SK-N-SH (cell line): ENCODE measurements at regions of chr6 and their contacts with region 1.

Region 1: GRCh38 chr6:158605266-158605878 is 39.2 kb downstream of the DYNLT1 start:
- DNase-seq: peak; percentile 85
- H3K4me3 ChIP-seq: no peak overlapping the region
- H3K27ac ChIP-seq: no peak overlapping the region
- H3K4me1 ChIP-seq: peaks cover 0 to 15% of the 10 kb centered on the region in 2 experiments; a peak in 2 of 4 replicates
- H3K27me3 ChIP-seq: no peaks in the 10 kb centered on the region
- CTCF ChIP-seq: peak; percentile 74
- EP300 ChIP-seq: no peak
- RAD21 ChIP-seq: peak; percentile 79

Region 2: DNA sequence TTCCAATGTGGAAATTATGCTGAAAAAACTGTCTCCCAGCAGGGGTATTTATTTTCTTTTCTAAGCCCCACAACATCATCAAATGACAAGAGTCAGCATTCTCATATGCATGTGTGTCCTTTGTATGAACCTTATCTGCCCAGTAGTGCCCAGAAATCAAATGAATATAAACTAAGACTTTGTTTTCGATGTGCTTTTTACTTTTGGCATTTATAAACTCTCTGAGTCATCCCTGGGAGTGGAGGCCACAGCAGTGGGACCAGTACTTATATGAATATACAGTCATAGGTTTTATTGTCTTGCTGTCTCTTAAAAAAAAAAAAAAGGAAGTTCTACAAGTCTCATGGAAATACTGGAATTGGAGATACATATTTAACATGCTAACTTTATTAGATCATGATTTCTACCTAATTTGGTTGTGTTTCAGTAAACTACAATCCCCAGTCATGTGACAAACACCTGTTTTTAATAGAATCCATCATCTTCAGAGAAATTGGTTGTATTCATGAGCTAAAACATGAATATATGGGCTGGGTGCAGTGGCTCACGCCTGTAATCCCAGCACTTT is 144.7 kb before region 1 on chr6:
- CTCF ChIA-PET with region 1: no interaction called
- POLR2A ChIA-PET with region 1: no interaction called
- DNase-seq: no peak
- H3K4me3 ChIP-seq: no peak overlapping the region
- H3K27ac ChIP-seq: peak overlapping the region; percentile 44 to 47; a peak in 2 of 4 replicates
- H3K4me1 ChIP-seq: peaks cover 8 to 10% of the 10 kb centered on the region in 2 experiments; a peak in 2 of 4 replicates
- H3K27me3 ChIP-seq: no peaks in the 10 kb centered on the region
- CTCF ChIP-seq: no peak
- EP300 ChIP-seq: no peak
- RAD21 ChIP-seq: no peak

Region 3: DNA sequence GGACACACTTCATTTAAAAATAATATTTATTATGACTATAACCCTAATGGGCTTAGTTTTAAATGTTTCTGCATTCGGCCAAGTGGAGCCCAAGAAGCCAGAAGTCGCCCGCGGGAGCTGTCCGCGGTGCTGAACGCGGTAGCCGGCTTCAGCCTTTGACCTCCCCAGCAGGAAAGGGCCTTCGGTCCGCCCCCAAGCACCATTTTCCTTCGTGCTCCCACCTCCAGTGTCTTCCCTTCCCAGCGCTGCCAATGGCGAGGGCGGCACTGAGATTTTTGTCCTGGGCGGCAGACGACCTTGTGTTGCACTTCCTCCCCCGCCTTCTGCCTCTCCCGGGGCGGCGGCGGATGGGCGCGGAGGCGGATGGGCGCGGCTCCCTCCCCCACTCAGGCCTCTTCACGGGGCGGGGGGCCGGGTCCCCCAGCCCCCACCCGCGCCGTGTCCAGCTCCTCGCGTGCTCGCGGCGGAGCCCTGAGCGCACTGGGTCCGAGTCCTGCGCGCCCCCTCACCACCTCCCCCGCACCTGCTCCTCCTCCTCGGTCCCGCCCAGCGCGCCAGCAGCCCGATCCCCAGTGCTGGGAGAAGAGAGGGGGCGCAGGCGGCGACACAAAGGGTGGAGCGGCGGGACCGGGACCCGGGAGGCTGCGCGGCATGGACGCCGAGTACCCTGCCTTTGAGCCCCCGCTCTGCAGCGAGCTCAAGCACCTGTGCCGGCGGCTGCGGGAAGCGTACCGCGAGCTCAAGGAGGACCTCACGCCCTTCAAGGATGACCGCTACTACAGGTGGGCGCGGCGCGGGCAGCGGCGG is 69.1 kb before region 1 on chr6:
- CTCF ChIA-PET with region 1: interaction called, 21 read pairs
- POLR2A ChIA-PET with region 1: interaction called, 6 read pairs
- DNase-seq: peak; percentile 90
- H3K4me3 ChIP-seq: peak overlapping the region; percentile 64 to 84
- H3K27ac ChIP-seq: peak overlapping the region in 1 of 2 experiments; percentile 87; a peak in 2 of 4 replicates
- H3K4me1 ChIP-seq: peaks cover 0 to 8% of the 10 kb centered on the region in 2 experiments; a peak in 1 of 4 replicates
- H3K27me3 ChIP-seq: no peaks in the 10 kb centered on the region
- CTCF ChIP-seq: no peak
- EP300 ChIP-seq: no peak
- RAD21 ChIP-seq: no peak

Region 4: DNA sequence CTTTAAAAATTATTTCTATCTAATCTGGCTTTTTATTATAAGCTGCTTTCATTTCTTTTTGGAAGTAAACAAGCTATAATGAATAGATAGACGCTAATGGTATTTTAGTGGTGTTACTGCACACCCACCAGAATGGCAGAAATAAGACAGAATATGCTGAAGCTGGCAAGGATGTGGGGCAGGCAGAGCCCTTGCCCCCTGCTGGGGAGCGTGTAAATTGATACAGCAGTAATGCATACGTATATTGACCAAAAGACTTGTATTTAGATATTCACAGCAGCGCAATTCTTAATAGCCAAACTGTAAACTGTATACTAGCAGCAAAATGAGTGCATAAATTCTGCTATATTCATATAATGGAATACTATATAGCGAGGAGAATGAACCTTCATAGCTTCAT is 10.1 kb before region 1 on chr6:
- CTCF ChIA-PET with region 1: interaction called, 13 read pairs
- POLR2A ChIA-PET with region 1: no interaction called
- DNase-seq: peak; percentile 42
- H3K4me3 ChIP-seq: no peak overlapping the region
- H3K27ac ChIP-seq: no peak overlapping the region
- H3K4me1 ChIP-seq: no peaks in the 10 kb centered on the region; a peak in 1 of 4 replicates
- H3K27me3 ChIP-seq: no peaks in the 10 kb centered on the region
- CTCF ChIP-seq: peak; percentile 52
- EP300 ChIP-seq: no peak
- RAD21 ChIP-seq: peak; percentile 20; the same call in 1 of the 2 replicates

Region 5: DNA sequence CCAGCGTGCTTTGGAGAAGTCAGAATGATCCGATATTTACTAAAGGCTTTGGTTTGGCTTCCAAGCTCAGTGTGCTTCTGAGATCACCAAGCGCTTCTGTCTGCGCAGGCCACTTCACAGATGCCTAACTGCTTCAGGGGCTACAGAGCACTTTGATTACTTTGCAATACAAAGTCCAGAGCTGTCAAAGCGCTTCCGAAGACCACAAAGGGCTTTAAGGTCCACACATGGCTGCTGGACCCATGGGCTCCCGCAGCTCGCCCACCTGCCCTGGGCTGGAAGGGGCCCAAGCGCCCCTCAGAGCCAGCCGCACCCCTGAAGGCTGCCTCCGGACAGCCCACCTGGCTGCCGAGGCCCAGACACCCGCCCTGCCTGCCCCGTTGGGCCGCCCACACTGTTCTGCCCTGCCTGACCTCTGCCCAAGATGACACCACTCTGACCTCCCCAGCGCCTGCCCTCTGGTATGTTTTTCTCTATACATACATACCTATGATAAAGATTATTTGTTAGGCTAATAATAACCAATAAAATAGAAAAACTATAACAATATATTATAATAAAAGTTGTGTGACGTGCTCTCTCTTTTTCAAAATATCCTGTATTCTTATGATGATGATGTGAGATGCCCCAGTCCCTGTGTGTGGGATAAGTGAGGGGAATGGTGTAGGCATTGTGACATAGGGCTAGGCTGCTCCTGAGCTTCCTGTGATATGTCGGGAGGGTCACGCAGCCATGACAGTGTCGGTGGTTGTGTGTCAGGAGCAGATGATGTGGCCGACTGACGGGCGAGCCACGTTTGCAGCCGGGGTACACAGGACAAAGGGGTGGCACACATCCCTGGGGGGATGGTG is 16.5 kb after region 1 on chr6:
- CTCF ChIA-PET with region 1: interaction called, 14 read pairs
- POLR2A ChIA-PET with region 1: no interaction called
- DNase-seq: peak; percentile 85
- H3K4me3 ChIP-seq: no peak overlapping the region; a peak in 1 of 4 replicates
- H3K27ac ChIP-seq: peak overlapping the region in 1 of 2 experiments; percentile 99; a peak in 2 of 4 replicates
- H3K4me1 ChIP-seq: peaks cover 0 to 45% of the 10 kb centered on the region in 2 experiments; a peak in 2 of 4 replicates
- H3K27me3 ChIP-seq: no peaks in the 10 kb centered on the region
- CTCF ChIP-seq: no peak
- EP300 ChIP-seq: peak in 1 of 2 experiments; percentile 87; a peak in 2 of 4 replicates
- RAD21 ChIP-seq: no peak; the same call in 1 of the 2 replicates

Region 6: DNA sequence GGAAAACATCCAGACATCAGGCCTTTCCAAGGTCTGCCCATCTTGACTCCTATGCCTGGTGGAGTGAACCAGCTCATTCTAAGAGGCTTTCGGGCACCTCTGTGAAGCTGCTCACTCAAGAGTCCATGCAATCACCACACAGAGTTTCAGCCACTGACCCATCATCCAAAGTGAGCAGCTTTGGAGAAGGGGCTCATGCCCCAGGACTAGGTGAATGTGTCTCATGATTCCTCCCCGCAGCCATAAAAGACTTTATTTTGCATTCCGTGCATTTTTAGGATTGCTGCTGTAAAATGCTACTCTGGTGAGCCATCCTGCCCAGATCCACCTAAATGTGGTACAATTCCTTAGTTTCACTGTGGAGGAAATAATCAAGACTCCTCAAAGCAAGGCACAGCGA is 258.3 kb after region 1 on chr6:
- CTCF ChIA-PET with region 1: no interaction called
- POLR2A ChIA-PET with region 1: no interaction called
- DNase-seq: no peak
- H3K4me3 ChIP-seq: no peak overlapping the region
- H3K27ac ChIP-seq: no peak overlapping the region; a peak in 1 of 4 replicates
- H3K4me1 ChIP-seq: no peaks in the 10 kb centered on the region
- H3K27me3 ChIP-seq: no peaks in the 10 kb centered on the region
- CTCF ChIP-seq: no peak
- EP300 ChIP-seq: no peak
- RAD21 ChIP-seq: no peak